Activated T-helper 1 cell treated with anti-CD3 and anti-CD28 coated beads, Interleukin-12 subunit alpha, Interleukin-12 subunit beta, Interleukin-2, Interleukin-4 antibody, amounts not matched to agents 30 ng/mL and 10 ng/mL and 1 ng/mL, durations not matched to agents 14 hours and 24 hours and 36 hours (primary cell): ENCODE measurements at regions of chr19 and their contacts with region 1.

Region 1: GRCh38 chr19:45405435-45406225 is 761 bp upstream of the PPP1R13L start:
- DNase-seq: peak; percentile 77
- H3K4me3 Mint-ChIP-seq: peak overlapping the region; percentile 98
- H3K27ac Mint-ChIP-seq: peak overlapping the region; percentile 90
- H3K4me1 Mint-ChIP-seq: peaks cover 53% of the 10 kb centered on the region
- H3K27me3 Mint-ChIP-seq: peaks cover 12% of the 10 kb centered on the region

Region 2: GRCh38 chr19:45038931-45039893 is 366.4 kb before region 1 on chr19 and contains the start of gene CLASRP:
- intact Hi-C with region 1: loop called (anchors 1 kb)
- DNase-seq: peak; percentile 87
- H3K4me3 Mint-ChIP-seq: peak within 1 kb of the TSS; percentile 93
- H3K27ac Mint-ChIP-seq: peak within 1 kb of the TSS; percentile 95
- H3K4me1 Mint-ChIP-seq: peaks cover 23% of the 10 kb centered on the region
- H3K27me3 Mint-ChIP-seq: no peaks in the 10 kb centered on the region
- total RNA-seq, gene CLASRP: 106 and 116 TPM in 2 replicates

Region 3: GRCh38 chr19:45178262-45179071 is 227.2 kb before region 1 on chr19 and contains the start of gene BLOC1S3:
- intact Hi-C with region 1: loop called (anchors 1 kb)
- DNase-seq: peak; percentile 100
- H3K4me3 Mint-ChIP-seq: peak within 1 kb of the TSS; percentile 88
- H3K27ac Mint-ChIP-seq: peak within 1 kb of the TSS; percentile 88
- H3K4me1 Mint-ChIP-seq: peaks cover 19% of the 10 kb centered on the region
- H3K27me3 Mint-ChIP-seq: no peaks in the 10 kb centered on the region
- total RNA-seq, gene BLOC1S3: 10.4 and 10.5 TPM in 2 replicates

Region 4: DNA sequence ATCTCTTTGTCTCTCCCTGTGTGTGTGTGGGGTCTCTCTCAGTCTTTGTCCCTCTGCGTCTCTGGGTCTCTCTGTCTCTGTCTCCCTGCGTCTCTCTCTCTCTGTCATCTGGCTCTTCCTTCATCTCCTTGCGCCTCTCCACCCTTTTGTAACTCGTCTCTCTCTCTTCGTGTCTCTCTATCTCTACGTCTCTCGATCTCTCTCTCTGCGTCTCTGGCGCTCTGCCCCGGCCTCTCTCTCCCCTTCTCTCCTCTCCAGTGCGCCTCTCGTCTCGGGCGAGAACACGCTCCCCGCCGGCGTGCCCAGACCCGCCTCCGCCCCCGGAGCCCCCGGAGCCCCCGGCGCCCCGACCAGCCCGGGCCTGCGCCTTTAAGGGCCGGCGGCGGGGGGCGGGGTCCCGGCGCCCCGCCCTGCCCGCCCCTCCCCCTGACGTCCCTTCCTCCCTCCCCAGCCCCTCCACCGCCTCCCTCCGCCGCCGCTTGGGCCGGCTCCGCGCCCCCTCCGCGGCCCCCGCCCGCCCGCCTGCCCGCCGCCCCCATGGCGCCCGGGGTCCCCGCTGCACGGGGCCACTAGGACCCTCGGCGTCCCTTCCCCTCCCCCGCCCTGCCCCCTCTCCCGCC is 154.7 kb before region 1 on chr19 and contains the start of gene MARK4:
- intact Hi-C with region 1: no loop called
- DNase-seq: peak; percentile 40
- H3K4me3 Mint-ChIP-seq: peak within 1 kb of the TSS; percentile 87
- H3K27ac Mint-ChIP-seq: peak within 1 kb of the TSS; percentile 70
- H3K4me1 Mint-ChIP-seq: peaks cover 19% of the 10 kb centered on the region
- H3K27me3 Mint-ChIP-seq: peaks cover 2% of the 10 kb centered on the region
- total RNA-seq, gene MARK4: 27.1 and 27.2 TPM in 2 replicates

Region 5: DNA sequence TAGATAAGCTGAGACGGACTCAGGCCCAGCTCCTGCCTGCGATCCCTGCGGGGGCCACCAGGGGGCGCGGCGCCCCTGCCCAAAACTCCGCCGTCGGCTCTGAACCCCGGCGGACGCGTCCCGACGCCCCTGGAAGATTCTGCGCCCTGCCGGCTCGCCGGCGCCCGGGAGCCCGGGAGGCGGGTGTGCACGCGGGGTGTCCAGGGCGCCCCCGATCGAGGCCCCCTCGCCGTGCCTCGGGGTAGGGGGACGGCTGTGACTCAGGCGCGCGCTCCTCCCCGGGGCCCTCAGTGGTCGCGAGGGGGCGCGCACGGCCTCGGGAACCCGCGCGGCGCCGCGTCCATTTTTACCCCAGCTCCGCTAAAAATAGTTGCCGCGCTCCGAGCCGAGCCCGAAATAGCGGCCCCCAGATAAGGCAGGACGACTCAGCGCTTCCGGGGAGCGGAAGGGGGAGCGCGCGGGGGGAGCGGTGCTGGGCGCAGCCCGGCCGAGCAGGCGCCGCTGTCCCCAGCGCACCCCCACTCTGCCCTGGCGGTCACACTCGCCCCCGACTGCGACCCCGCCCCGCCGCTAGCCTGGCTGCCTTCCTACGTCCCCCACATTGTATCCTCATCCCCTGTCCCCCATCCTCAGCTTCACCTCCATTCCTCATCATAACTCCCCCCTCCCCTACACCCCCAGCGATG is 34.1 kb after region 1 on chr19:
- intact Hi-C with region 1: loop called (anchors 5 kb)
- DNase-seq: peak; percentile 73
- H3K4me3 Mint-ChIP-seq: peak overlapping the region; percentile 77
- H3K27ac Mint-ChIP-seq: peak overlapping the region; percentile 71
- H3K4me1 Mint-ChIP-seq: peaks cover 34% of the 10 kb centered on the region
- H3K27me3 Mint-ChIP-seq: peaks cover 3% of the 10 kb centered on the region

Region 6: GRCh38 chr19:45506246-45506990 is 100.8 kb after region 1 on chr19:
- intact Hi-C with region 1: loop called (anchors 1 kb)
- DNase-seq: peak; percentile 94
- H3K4me3 Mint-ChIP-seq: peak overlapping the region; percentile 95
- H3K27ac Mint-ChIP-seq: peak overlapping the region; percentile 95
- H3K4me1 Mint-ChIP-seq: peaks cover 20% of the 10 kb centered on the region
- H3K27me3 Mint-ChIP-seq: peaks cover 3% of the 10 kb centered on the region

Region 7: DNA sequence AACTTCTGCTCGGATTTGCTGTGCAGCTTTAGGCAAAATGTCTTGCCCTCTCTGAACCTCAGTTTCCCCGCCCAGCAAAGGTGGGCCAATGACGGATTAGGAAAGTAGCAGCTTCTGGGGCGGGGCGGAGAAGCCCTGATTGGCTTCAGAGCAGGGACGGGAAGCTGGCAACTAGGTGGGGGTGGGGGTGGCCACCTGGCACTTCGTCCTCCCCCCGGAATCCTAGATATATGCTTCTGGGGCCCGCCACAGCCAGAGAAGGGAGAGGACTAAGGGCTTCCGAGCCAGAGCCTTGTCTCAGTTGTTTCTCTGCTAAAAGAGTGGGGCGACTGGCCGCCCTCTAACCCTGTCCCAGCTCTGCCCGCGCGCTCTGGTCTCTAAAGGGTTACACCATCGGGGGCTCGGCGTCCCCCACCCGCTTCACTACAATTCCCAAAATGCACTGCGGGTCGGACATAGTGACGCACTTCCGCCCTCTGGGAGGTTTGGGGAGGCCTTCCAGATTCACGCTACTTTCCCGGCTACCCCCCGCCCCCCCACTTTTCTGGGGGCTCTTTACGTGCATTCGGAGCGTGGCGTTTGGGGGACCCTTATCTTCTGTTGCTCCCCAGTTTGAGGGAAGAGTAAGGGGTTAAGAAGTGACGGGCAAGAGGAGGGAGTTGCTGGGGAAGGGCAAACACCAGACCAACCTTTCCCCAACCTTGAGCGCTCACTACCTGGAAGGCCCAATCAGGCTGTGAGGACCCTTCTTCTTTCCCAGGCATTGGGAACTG is 481.0 kb after region 1 on chr19:
- intact Hi-C with region 1: loop called (anchors 2 kb)
- DNase-seq: peak; percentile 88
- H3K4me3 Mint-ChIP-seq: peak overlapping the region; percentile 88
- H3K27ac Mint-ChIP-seq: peak overlapping the region; percentile 95
- H3K4me1 Mint-ChIP-seq: peaks cover 13% of the 10 kb centered on the region
- H3K27me3 Mint-ChIP-seq: peaks cover 1% of the 10 kb centered on the region

Region 8: DNA sequence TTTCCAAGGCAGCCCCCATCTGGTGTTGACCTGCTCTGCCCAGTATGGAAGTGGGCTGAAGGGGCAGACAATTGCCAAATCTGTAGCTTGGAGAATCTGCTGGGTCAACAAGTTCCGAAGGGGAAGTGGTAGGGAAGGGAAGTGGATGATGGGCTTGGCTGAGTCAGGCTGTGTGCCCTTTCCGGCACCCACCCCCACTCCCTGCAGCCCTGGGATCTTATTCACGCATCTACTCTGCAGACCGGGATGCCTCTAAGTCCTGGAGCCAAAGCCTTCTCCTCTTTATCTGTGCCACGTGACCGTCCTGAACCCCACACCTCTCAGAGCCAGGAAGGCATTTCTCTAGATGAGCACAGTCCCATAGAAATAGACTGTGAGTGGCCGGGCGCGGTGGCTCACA is 1918.9 kb after region 1 on chr19:
- intact Hi-C with region 1: no loop called
- DNase-seq: no peak
- H3K4me3 Mint-ChIP-seq: no peak overlapping the region
- H3K27ac Mint-ChIP-seq: no peak overlapping the region
- H3K4me1 Mint-ChIP-seq: no peaks in the 10 kb centered on the region
- H3K27me3 Mint-ChIP-seq: peaks cover 5% of the 10 kb centered on the region